Sciatic nerve (tissue), 2 donors: ENCODE measurements at regions of chr6 and their contacts with region 1.

Region 1: GRCh38 chr6:15171026-15171425 is 74.8 kb upstream of the JARID2 start:
- DNase-seq: no peak
- ATAC-seq: no peak

Region 2: GRCh38 chr6:15137086-15137485 is 33.9 kb before region 1 on chr6:
- intact Hi-C with region 1: loop called (anchors 1 kb)
- DNase-seq: no peak
- ATAC-seq: no peak